AG04450 (cell line): ENCODE measurements at regions of chr12 and their contacts with region 1.

Region 1: GRCh38 chr12:110100315-110100970 is 23.7 kb upstream of the IFT81 start:
- DNase-seq: peak; percentile 55
- H3K4me3 ChIP-seq: no peak overlapping the region
- H3K27ac ChIP-seq: no peak overlapping the region
- H3K27me3 ChIP-seq: no peaks in the 10 kb centered on the region
- CTCF ChIP-seq: peak; percentile 93

Region 2: DNA sequence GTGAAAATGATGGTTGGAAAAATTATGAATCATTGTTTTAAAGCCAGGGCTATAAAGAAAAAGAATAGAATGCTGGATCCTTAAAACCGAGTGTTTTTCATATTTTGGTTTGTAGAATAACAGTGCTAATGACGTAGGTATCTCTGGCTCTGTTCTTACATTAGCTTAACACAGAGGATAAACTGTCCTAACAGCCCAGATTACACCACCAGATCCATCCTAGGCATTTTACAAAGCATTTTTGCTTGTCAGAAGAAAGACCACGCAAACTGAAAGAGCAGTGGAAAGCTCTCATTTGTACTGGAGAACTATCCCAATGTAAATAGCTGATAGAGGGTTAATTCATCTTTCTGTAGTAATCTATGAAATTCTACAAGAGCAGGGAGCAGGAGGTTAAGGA is 37.3 kb after region 1 on chr12:
- CTCF ChIA-PET with region 1: interaction called, 12 read pairs
- POLR2A ChIA-PET with region 1: no interaction called
- DNase-seq: no peak
- H3K4me3 ChIP-seq: no peak overlapping the region
- H3K27ac ChIP-seq: no peak overlapping the region
- H3K27me3 ChIP-seq: no peaks in the 10 kb centered on the region
- CTCF ChIP-seq: no peak

Region 3: DNA sequence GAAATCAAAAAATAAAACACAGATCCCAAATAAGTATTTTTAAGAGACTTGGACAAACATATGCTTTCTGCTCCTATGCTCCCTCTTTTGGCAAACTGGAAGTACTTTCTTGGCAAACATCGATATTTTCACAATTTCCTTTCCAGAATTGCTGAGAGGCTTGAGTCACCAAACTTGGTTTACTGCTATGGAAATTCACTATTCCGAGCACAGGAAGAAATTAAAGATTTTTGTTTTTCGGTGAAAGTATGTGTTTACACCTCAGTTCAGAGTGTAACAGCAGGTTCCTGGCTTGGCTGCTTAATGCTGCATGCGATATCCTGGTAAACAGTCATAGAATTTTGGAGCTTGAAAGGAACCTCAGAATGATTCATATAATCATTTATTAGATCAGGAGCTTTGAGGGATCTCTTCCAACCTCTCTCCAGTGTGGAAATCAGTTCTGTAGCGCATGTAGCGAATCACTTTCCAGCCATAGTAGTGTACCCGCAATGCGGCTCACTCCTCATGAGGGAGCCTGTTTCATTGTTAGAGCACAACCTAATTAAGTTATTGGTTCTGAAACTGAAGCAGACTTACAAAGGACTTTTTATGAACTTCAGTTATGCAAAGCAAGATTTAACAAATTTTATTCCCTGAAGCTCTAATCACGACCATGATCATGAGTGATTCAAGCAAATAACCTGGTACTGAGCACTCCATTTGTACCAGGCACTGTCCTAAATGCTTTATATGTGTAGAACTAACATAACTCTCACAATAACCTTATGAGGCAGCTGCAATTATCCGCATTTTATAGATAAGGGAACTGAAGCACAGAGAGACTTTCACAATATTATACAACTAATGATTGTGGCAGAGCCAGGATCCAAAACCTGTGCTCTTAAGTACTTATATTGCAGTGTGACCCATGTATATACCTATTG is 124.2 kb after region 1 on chr12:
- CTCF ChIA-PET with region 1: interaction called, 25 read pairs
- POLR2A ChIA-PET with region 1: no interaction called
- DNase-seq: peak; percentile 62
- H3K4me3 ChIP-seq: peak overlapping the region; percentile 23
- H3K27ac ChIP-seq: peak overlapping the region; percentile 43
- H3K27me3 ChIP-seq: no peaks in the 10 kb centered on the region
- CTCF ChIP-seq: peak; percentile 77

Region 4: DNA sequence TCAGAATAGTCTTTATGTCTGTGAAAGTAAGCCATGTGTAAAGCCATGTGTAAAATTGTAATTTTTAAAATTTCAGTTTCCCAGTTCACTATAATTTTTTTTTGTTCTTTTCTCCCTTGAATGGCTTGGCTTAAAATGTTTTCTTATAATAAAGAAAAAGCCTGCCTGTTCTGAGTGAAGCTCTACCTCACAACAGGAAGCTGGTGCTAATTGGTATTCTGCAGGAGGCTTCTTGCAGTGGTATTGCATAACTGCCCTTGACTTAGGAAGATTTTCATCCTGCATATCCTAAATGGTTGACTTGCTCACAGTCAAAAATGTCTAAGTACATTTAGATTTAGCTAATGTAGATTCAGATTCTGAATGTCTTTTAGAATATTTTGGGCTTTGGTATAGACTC is 230.1 kb after region 1 on chr12:
- CTCF ChIA-PET with region 1: interaction called, 12 read pairs
- POLR2A ChIA-PET with region 1: no interaction called
- DNase-seq: no peak
- H3K4me3 ChIP-seq: no peak overlapping the region
- H3K27ac ChIP-seq: no peak overlapping the region
- H3K27me3 ChIP-seq: no peaks in the 10 kb centered on the region
- CTCF ChIP-seq: no peak